ENCODE measurements at regions of chr11 and their contacts with region 1.

Region 1: DNA sequence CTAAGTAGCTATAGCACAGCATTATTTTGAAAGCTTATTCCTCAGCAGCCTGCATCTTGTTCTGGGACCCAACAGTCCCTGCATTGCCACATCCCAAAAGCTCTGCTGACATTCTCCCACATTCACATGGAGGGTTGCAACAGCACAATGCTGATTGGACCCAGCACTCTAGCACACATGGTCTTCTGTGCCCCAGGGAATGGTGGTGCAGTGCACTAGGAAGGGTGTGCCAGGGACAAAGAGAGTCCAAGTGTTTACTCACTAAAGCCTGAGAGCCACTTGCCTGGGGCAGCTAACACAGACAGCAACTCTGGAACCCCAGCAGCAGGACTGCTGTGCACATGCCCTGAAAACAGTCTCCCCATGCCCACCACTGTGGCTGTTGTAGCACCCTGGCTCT is 140.2 kb downstream of the CASP12 start:
- DNase-seq: no peak
- H3K4me3 Mint-ChIP-seq: no peak overlapping the region
- H3K27ac Mint-ChIP-seq: no peak overlapping the region
- H3K4me1 Mint-ChIP-seq: no peaks in the 10 kb centered on the region
- H3K27me3 Mint-ChIP-seq: no peaks in the 10 kb centered on the region
- CTCF ChIP-seq: no peak

Region 2: GRCh38 chr11:104609311-104610085 is 148.5 kb before region 1 on chr11:
- CTCF ChIA-PET with region 1: no interaction called
- intact Hi-C with region 1: loop called (anchors 10 kb)
- DNase-seq: peak; percentile 25
- H3K4me3 Mint-ChIP-seq: no peak overlapping the region
- H3K27ac Mint-ChIP-seq: no peak overlapping the region
- H3K4me1 Mint-ChIP-seq: no peaks in the 10 kb centered on the region
- H3K27me3 Mint-ChIP-seq: no peaks in the 10 kb centered on the region
- CTCF ChIP-seq: peak; percentile 44

Region 3: GRCh38 chr11:104678408-104678807 is 79.6 kb before region 1 on chr11:
- CTCF ChIA-PET with region 1: no interaction called
- intact Hi-C with region 1: no loop called
- DNase-seq: no peak
- H3K4me3 Mint-ChIP-seq: no peak overlapping the region
- H3K27ac Mint-ChIP-seq: no peak overlapping the region
- H3K4me1 Mint-ChIP-seq: peaks cover 9% of the 10 kb centered on the region
- H3K27me3 Mint-ChIP-seq: no peaks in the 10 kb centered on the region
- CTCF ChIP-seq: no peak

Measured in Calu3 (cell line).